A673 (cell line): ENCODE measurements at regions of chr9 and their contacts with region 1.

Region 1: DNA sequence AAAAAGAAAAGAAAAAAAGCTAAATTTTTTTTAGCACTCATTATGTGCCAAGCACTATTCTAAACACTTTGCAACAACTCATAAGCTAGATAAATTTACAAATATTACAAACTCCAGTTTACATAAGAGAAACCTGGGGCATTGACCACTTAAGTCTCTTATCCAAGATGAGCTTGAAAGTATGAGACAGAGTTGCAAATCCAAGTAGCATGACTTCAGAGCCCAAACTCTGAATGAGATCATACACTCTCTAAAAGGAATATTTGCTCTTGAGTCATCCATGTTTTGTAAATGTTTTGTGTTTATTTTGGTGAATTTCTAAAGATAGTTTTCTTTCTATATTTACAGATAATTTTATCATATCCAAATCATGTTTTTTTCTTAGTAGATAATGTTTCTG is 4.0 kb upstream of the SHOC1 start:
- DNase-seq: no peak
- H3K4me3 ChIP-seq: no peak overlapping the region
- H3K27ac ChIP-seq: no peak overlapping the region
- H3K4me1 ChIP-seq: peaks cover 15% of the 10 kb centered on the region
- H3K27me3 ChIP-seq: no peaks in the 10 kb centered on the region
- CTCF ChIP-seq: no peak

Region 2: DNA sequence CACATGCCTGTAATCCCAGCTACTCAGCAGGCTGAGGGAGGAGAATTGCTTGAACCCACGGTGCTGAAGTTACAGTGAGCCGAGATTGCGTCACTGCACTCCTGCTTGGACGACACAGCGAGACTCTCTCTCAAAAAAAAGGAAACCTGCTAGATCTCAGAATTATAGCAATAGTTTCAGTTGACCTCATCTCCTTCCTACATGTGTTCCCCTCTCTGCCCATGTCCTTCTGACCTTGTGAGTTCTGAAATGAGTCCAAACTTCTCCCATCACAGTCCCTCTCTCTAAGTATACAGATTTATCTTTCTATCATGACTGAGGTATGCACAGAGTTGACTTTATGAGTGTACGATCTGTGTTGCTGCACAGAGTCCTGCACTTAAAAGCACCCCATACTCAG is 40.6 kb after region 1 on chr9:
- CTCF ChIA-PET with region 1: no interaction called
- POLR2A ChIA-PET with region 1: no interaction called
- intact Hi-C with region 1: no loop called
- DNase-seq: peak; percentile 54
- H3K4me3 ChIP-seq: no peak overlapping the region
- H3K27ac ChIP-seq: peak overlapping the region; percentile 12
- H3K4me1 ChIP-seq: peaks cover 24% of the 10 kb centered on the region
- H3K27me3 ChIP-seq: no peaks in the 10 kb centered on the region
- CTCF ChIP-seq: no peak

Region 3: DNA sequence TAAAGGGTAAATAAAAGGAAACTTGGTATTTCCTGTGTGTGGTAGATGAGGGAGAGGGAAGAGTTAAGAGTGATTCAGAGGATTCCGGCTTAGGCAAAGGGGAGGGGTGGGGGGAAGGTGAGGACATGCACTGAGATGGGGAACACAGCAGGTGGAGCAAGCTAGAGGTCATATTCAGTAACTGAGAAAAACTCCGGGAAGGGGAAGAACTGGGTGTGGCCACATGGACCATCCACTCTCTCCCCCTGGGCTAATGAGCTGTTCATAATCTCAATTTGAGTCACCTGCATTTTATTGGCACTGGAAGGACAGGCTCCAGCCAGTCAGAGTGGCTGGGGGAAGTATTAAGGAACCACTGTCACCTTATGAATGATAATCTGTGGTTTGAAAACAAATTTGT is 52.8 kb after region 1 on chr9:
- CTCF ChIA-PET with region 1: no interaction called
- POLR2A ChIA-PET with region 1: no interaction called
- intact Hi-C with region 1: no loop called
- DNase-seq: peak; percentile 38
- H3K4me3 ChIP-seq: no peak overlapping the region
- H3K27ac ChIP-seq: no peak overlapping the region
- H3K4me1 ChIP-seq: peaks cover 19% of the 10 kb centered on the region
- H3K27me3 ChIP-seq: no peaks in the 10 kb centered on the region
- CTCF ChIP-seq: no peak

Region 4: GRCh38 chr9:111926421-111926875 is 127.7 kb after region 1 on chr9:
- CTCF ChIA-PET with region 1: no interaction called
- POLR2A ChIA-PET with region 1: no interaction called
- intact Hi-C with region 1: no loop called
- DNase-seq: peak; percentile 99
- H3K4me3 ChIP-seq: no peak overlapping the region
- H3K27ac ChIP-seq: peak overlapping the region; percentile 73
- H3K4me1 ChIP-seq: peaks cover 54% of the 10 kb centered on the region
- H3K27me3 ChIP-seq: no peaks in the 10 kb centered on the region
- CTCF ChIP-seq: no peak

Region 5: DNA sequence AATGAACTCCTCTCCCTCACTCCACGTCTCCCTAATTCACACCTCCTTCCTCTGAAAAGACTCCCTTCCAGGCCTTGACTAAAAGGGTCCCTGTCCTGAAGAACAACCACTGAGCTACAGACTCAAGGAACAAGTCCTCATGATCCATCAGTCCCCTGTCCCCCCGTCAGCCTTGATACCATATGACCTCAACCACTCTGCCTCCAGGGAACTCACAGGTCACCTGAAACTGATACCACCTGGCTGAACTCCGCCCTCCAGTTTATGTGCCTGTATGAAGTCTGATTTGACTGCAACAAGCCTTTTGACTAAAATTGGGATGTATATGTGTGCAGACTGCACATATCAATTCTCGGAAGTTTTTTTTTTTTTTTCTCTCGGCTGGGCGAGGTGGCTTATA is 186.5 kb after region 1 on chr9:
- CTCF ChIA-PET with region 1: no interaction called
- POLR2A ChIA-PET with region 1: interaction called, 19 read pairs
- intact Hi-C with region 1: no loop called
- DNase-seq: no peak
- H3K4me3 ChIP-seq: no peak overlapping the region
- H3K27ac ChIP-seq: no peak overlapping the region
- H3K4me1 ChIP-seq: no peaks in the 10 kb centered on the region
- H3K27me3 ChIP-seq: no peaks in the 10 kb centered on the region
- CTCF ChIP-seq: no peak